ENCODE measurements at regions of chr10 and their contacts with region 1.

Region 1: GRCh38 chr10:86585037-86585725 is 63.6 kb upstream of the WAPL start:
- DNase-seq: peak; percentile 38 to 87
- H3K4me3 ChIP-seq: no peak overlapping the region
- CTCF ChIP-seq: no peak
- POLR2A ChIP-seq: no peak

Region 2: DNA sequence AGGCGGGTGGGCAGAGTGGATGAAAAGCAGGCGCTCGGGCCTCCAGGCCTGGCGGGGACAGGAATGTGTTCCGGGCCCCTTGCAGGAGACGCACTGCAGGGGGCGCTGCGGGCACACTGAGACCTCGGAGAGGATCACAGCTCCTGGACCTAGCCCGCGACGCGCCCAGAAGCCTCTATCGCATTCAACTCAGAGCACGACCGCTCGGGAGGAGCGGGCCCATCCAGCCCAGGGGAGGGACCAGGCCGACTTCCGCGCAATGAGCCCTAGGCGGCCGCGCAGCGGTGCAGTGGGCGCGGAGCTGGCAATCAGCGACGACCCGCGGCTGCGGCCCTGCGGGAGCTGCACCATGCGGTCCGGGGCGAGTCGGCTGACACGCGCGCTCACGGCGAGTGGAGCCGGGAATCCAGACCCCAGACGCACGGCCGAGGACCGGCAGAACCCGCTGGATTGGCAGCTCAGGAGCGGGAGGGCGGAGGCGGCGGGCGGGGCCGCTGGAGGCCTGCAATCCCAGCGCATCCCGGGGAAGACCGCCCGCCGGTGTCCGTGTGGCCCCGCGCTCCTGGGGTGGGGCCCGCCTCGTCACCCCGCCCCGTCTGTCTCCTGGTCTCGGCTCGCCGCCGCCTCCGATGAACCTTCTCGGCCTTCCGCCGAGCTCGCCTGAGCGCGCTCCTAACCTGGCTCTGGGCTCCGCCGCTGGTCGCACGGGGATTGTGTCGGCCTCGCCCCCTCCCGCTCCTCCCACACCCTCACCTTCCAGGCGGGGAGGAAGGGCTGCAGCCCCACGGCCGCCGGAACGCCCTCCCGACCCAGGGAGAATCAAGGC is 185.1 kb before region 1 on chr10:
- intact Hi-C with region 1: loop called (anchors 5 kb)
- DNase-seq: peak; percentile 91 to 98
- H3K4me3 ChIP-seq: peak overlapping the region; percentile 33
- CTCF ChIP-seq: peak in 1 of 3 donors; percentile 85
- POLR2A ChIP-seq: no peak

Region 3: GRCh38 chr10:86521678-86522509 is 63.3 kb before region 1 on chr10 and contains the start of gene WAPL:
- intact Hi-C with region 1: loop called (anchors 2 kb)
- DNase-seq: peak; percentile 94 to 99
- H3K4me3 ChIP-seq: peak within 1 kb of the TSS; percentile 86
- CTCF ChIP-seq: no peak
- POLR2A ChIP-seq: no peak
- total RNA-seq, gene WAPL: 37.7 to 46.4 (median 43.0) TPM

Measured in lower leg skin (tissue), 4 donors.